ENCODE measurements at regions of chr9 and their contacts with region 1.

Region 1: DNA sequence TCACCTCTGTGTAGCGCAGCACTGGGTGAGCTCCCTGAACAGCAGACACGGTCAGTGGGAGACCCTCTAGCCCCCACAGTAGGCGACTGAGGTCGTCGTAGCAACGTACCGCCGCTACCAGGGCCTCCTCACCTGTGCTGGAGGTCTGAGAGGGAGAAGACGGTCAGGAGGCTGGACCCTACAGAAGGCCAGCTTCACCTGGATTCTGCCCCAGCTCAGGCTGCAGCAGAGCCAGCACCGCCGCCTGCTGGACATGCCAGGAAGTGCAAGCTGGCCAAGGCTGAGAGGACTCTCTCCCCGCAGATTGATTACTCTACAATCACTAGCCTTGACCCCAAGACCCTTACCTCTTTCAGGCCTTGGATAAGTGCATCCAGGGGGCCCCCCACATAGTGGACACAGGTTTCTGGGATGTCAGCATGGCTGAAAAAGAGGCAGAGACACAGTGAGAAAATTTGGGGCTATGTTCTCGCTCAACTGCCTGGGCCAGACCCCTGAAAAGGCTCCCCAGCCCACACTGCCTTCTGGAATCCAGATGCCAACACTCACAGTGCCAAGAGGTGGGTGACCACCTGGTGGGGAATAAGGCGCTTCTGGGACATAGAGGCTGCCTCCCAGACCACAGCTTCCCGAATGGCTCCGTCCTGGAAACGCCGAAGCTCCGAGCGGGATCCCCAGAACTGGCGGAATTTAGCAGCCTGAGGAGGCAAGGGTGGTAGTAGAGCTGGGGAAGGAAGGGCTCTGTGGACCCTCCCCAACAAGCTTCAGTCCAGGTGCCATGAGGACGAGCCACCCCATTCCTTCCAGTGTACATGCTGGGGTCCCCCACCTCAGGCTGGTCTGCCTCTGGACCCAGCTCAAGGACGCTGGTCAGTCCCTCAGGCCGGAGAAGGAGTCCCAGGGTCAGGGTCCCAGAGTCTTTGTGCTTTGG is 6.9 kb downstream of the NOL6 start:
- DNase-seq: no peak
- H3K4me3 ChIP-seq: no peak overlapping the region
- H3K27ac ChIP-seq: no peak overlapping the region
- H3K27me3 ChIP-seq: no peaks in the 10 kb centered on the region
- CTCF ChIP-seq: peak; percentile 98

Region 2: DNA sequence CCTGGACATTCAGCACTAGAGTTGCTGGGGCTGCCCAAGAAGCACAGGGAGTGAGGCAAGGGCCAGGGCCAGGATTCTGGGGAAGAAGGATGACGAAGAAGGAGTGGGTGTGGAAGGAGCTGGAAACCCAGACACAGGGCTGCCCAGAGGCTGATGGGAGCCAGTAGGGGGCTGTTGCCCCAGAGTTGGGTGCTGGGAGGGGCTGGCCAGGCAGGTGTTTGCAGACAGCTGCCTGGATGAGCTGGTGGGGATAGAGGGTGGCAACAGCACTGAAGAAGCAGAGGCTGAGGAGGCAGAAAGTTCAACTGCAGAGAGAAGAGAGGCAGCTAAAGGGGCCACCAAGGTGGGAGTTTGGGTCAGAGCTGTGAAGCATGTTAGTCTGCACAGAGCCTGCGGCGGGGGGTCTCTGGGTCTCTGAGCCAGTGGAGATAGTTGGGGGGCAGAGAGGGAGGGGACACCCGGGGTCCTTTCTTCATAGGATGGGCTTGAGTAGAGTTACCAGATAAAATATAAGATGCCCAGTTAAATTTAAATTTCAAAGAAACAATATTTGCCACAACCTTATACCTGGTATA is 62.0 kb before region 1 on chr9:
- CTCF ChIA-PET with region 1: interaction called, 13 read pairs
- POLR2A ChIA-PET with region 1: no interaction called
- DNase-seq: no peak
- H3K4me3 ChIP-seq: no peak overlapping the region
- H3K27ac ChIP-seq: no peak overlapping the region
- H3K27me3 ChIP-seq: no peaks in the 10 kb centered on the region
- CTCF ChIP-seq: no peak

Region 3: DNA sequence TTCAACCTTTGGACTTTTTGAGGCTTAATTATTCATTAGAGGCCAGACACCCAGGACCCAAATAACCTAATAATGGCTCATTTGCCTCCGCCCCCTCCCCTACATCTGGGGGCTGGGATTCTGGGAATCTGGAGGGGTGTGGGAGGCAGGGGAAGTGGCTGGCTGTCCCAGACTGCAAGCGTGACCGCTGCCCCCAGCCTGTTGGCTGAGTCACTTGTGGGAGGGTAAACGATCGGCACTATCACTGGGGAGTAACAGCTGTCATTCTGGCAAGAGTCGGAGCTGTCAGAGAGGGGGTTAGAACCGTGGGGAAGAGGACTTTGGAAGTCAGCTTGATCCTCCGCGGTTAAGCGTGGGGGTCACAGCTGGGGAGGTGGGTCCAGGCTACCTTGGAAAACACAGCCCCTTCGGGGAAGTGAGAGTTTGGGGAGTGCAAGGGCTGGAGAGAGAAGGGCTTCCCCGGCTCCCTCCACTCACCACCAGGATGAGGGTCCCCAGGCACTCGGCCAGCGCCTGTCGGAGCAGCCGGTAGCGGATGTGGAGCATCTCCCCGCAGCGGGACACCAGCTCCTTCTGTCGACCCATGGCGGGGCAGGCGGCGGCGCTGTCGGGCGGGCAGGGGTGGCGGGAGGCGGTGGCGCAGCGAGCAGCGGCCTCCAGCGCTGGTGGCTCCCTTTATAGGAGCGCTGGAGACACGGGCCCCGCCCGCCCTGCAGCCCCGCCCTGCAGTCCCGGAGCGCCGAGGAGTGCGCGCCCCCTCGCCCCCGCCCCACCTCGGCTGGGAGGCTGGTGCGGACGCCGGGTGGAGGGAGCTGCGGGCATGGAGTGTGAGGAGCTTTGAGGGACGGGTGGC is 19.7 kb before region 1 on chr9 and contains the start of gene AQP3:
- CTCF ChIA-PET with region 1: interaction called, 47 read pairs
- POLR2A ChIA-PET with region 1: no interaction called
- DNase-seq: peak; percentile 10
- H3K4me3 ChIP-seq: peak within 1 kb of the TSS; percentile 55
- H3K27ac ChIP-seq: no peak within 1 kb of the TSS
- H3K27me3 ChIP-seq: no peaks in the 10 kb centered on the region
- CTCF ChIP-seq: 0 out of 2 replicates have a peak, but pooled peaks have one; percentile 25
- polyA plus RNA-seq, gene AQP3: 10.6 and 12.4 TPM in 2 replicates